ENCODE measurements at regions of chr15 and their contacts with region 1.

Region 1: GRCh38 chr15:92808978-92809879 is 90.9 kb upstream of the CHD2 start:
- DNase-seq: peak; percentile 99
- H3K4me3 ChIP-seq: peak overlapping the region; percentile 32 to 51 (median 39)
- H3K27ac ChIP-seq: peak overlapping the region; percentile 88
- H3K4me1 ChIP-seq: peaks cover 16% of the 10 kb centered on the region
- H3K27me3 ChIP-seq: no peaks in the 10 kb centered on the region
- CTCF ChIP-seq: peak; percentile 85 to 100
- POLR2A ChIP-seq: peak; percentile 72

Region 2: GRCh38 chr15:92617549-92618520 is 191.4 kb before region 1 on chr15:
- CTCF ChIA-PET with region 1: no interaction called
- POLR2A ChIA-PET with region 1: no interaction called
- dilution Hi-C with region 1: no loop called
- intact Hi-C with region 1: loop called (anchors 5 kb)
- DNase-seq: peak; percentile 99
- H3K4me3 ChIP-seq: no peak overlapping the region
- H3K27ac ChIP-seq: peak overlapping the region; percentile 72
- H3K4me1 ChIP-seq: peaks cover 29% of the 10 kb centered on the region
- H3K27me3 ChIP-seq: no peaks in the 10 kb centered on the region
- CTCF ChIP-seq: no peak
- POLR2A ChIP-seq: no peak

Region 3: DNA sequence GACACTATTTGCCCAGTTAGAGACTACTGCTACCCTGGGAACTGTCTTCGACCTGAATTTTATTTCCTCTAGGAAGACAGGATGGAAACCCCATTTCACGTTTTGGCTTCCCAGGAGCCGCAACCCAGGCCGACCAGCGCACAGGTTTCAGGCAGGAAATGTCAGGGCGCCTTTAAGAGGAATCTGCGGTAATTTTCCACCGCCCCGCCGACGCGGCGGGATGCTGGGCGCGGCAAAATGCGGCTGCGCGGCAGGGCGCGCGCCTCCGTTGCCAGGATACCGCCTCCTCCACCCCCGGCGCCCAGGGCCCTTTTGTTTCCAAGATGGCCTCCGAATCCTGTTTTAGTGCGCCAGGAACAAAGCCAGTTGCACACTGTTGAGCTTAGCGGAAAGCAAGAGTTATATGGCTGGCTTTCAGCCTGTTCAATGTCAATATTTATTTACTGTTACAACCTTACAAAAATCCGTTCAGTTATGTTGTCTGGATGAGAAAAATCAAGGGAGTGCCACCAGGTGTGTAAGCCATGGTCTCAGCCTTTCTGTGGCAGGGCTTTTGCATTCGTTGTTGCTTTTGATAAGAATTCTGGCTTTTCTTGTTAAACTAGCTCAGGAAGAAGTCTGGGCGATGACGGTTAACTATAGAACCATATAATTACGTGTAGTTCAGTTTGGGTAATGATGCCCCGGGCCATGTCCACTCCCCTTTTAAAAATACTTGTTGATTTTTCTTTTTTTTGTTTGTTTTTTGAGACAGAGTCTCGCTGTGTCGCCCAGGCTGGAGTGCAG is 11.2 kb after region 1 on chr15:
- CTCF ChIA-PET with region 1: interaction called, 6 read pairs
- POLR2A ChIA-PET with region 1: interaction called, 5 read pairs
- dilution Hi-C with region 1: no loop called
- intact Hi-C with region 1: loop called (anchors 1 kb)
- DNase-seq: peak; percentile 94
- H3K4me3 ChIP-seq: peak overlapping the region; percentile 15 to 62 (median 19)
- H3K27ac ChIP-seq: peak overlapping the region; percentile 64
- H3K4me1 ChIP-seq: peaks cover 9% of the 10 kb centered on the region
- H3K27me3 ChIP-seq: peaks cover 0 to 2% of the 10 kb centered on the region in 2 experiments
- CTCF ChIP-seq: no peak
- POLR2A ChIP-seq: peak; percentile 79

Region 4: GRCh38 chr15:92831655-92832328 is 22.6 kb after region 1 on chr15:
- CTCF ChIA-PET with region 1: interaction called, 12 read pairs
- POLR2A ChIA-PET with region 1: interaction called, 7 read pairs
- dilution Hi-C with region 1: no loop called
- intact Hi-C with region 1: loop called (anchors 1 kb)
- DNase-seq: peak; percentile 96
- H3K4me3 ChIP-seq: peak overlapping the region in 1 of 3 experiments; percentile 22
- H3K27ac ChIP-seq: peak overlapping the region; percentile 54
- H3K4me1 ChIP-seq: peaks cover 18% of the 10 kb centered on the region
- H3K27me3 ChIP-seq: no peaks in the 10 kb centered on the region
- CTCF ChIP-seq: no peak
- POLR2A ChIP-seq: no peak

Region 5: DNA sequence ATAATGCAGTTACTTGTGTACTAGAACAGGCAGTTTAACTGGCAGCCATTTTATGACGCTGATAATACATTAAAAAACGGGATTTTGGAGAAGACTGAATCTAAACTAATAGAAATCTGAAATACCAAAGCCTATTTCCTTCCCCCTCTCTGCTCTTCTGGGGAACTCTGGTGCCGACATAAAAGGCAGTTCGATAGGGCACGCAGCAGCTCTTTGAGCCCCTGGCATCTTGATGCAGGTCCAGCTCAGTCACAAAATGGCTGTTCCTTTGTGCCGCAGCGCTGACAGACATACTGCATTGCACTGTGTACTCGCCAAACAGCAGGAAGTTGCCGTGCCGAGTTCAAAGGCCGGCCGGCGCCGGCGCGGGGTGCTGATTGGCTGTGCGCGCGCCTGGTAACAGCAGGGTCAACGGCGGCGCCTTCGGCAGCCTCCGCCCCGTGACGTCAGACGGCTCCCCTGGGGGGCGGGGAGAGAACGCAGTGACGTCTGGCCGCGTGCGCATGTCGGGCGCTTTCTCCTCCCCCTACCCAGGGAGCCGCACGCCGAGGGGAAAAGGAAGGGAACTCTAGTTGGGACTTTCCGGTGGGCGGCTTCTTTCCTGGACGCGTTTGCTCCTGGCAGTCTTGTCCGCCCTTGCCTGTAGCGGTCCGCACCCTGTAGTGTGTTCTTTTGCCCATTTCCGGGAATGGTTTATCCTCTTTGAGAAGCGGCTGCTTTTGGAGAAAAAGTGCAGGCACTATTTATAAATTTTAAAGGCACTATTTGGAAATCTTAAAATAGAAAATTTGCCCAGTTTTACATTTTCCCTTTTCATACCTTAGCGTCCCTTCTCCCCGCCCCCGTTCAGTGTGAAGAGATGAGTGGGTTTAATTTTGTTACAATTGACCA is 95.0 kb after region 1 on chr15:
- CTCF ChIA-PET with region 1: interaction called, 34 read pairs
- POLR2A ChIA-PET with region 1: interaction called, 12 read pairs
- dilution Hi-C with region 1: loop called (anchors 25 kb)
- intact Hi-C with region 1: loop called (anchors 1 kb)
- DNase-seq: peak; percentile 99
- H3K4me3 ChIP-seq: peak overlapping the region; percentile 64 to 100 (median 97)
- H3K27ac ChIP-seq: peak overlapping the region; percentile 98
- H3K4me1 ChIP-seq: peaks cover 54% of the 10 kb centered on the region
- H3K27me3 ChIP-seq: no peaks in the 10 kb centered on the region
- CTCF ChIP-seq: no peak
- POLR2A ChIP-seq: peak; percentile 95

Region 6: GRCh38 chr15:92917606-92918407 is 108.6 kb after region 1 on chr15:
- CTCF ChIA-PET with region 1: interaction called, 51 read pairs
- POLR2A ChIA-PET with region 1: no interaction called
- dilution Hi-C with region 1: loop called (anchors 25 kb)
- intact Hi-C with region 1: loop called (anchors 1 kb)
- DNase-seq: peak; percentile 98
- H3K4me3 ChIP-seq: peak overlapping the region in 1 of 3 experiments; percentile 42
- H3K27ac ChIP-seq: peak overlapping the region; percentile 87
- H3K4me1 ChIP-seq: peaks cover 56% of the 10 kb centered on the region
- H3K27me3 ChIP-seq: no peaks in the 10 kb centered on the region
- CTCF ChIP-seq: peak; percentile 69 to 82
- POLR2A ChIP-seq: peak; percentile 54

Measured in endothelial cell of umbilical vein (primary cell).